ENCODE measurements at regions of chr3 and their contacts with region 1.

Region 1: DNA sequence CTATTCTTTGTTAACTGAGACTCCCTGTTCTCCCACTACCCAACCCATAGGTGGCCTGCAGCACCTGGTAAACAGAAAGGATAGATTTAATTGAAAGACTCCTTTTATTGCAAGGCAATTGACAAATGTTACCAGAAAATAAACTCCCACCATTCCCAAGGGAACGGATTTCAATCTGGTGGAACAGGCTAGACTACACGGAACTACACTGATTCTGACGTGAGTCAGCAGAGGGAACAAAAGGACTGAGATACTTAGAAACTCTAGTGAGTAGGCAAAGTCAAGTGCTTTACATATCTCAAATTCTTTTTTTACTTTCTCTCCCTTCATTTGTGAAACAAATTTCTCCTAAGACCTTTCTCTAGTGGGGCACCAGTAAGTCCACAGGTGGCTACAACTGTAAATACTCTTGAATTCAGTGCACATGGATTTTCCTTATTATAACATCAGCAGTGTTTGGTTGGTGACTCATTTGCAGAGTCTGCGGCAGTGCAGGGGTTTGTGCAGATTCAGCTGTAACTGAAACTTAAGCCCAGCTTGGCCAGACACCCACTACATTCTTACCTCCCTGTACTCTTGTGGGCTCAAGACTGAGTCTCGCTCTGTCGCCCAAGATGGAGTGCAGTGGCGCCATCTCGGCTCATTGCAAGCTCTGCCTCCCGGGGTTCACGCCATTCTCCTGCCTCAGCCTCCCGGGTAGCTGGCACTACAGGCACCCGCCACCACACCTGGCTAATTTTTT is 34.3 kb upstream of the PLSCR2 start:
- DNase-seq: peak; percentile 70 to 93
- H3K4me3 ChIP-seq: peak overlapping the region; percentile 53
- H3K27ac ChIP-seq: peak overlapping the region; percentile 100
- H3K4me1 ChIP-seq: peaks cover 54% of the 10 kb centered on the region
- H3K27me3 ChIP-seq: no peaks in the 10 kb centered on the region
- CTCF ChIP-seq: peak; percentile 43; the same call in 1 of the 2 replicates

Region 2: DNA sequence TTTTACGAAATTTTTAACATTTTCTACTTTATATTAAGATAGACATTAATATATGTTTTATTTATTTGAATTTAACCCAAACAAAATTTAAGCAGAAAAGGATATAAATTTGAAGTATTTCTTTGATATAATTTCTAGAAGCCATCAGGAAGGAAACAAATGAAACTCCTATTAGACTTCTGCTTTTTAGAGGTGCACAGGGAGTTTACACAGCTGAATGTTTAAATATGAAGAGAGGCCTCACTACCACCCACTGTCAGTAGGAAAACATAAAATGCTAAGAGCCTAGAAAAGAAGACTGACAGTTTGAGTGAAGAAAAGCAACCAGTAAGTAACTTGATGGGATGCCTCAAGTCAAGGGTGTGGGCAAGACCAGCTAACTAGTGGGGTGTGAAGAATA is 54.0 kb before region 1 on chr3:
- CTCF ChIA-PET with region 1: no interaction called
- POLR2A ChIA-PET with region 1: no interaction called
- intact Hi-C with region 1: no loop called
- DNase-seq: no peak
- H3K4me3 ChIP-seq: no peak overlapping the region
- H3K27ac ChIP-seq: no peak overlapping the region
- H3K4me1 ChIP-seq: no peaks in the 10 kb centered on the region
- H3K27me3 ChIP-seq: no peaks in the 10 kb centered on the region
- CTCF ChIP-seq: no peak

Region 3: GRCh38 chr3:146552916-146553315 is 49.3 kb after region 1 on chr3:
- CTCF ChIA-PET with region 1: interaction called, 6 read pairs
- POLR2A ChIA-PET with region 1: interaction called, 15 read pairs
- intact Hi-C with region 1: no loop called
- DNase-seq: no peak
- H3K4me3 ChIP-seq: no peak overlapping the region
- H3K27ac ChIP-seq: no peak overlapping the region
- H3K4me1 ChIP-seq: no peaks in the 10 kb centered on the region
- H3K27me3 ChIP-seq: no peaks in the 10 kb centered on the region
- CTCF ChIP-seq: no peak

Region 4: GRCh38 chr3:146655333-146655996 is 151.8 kb after region 1 on chr3:
- CTCF ChIA-PET with region 1: no interaction called
- POLR2A ChIA-PET with region 1: no interaction called
- intact Hi-C with region 1: no loop called
- DNase-seq: no peak
- H3K4me3 ChIP-seq: no peak overlapping the region
- H3K27ac ChIP-seq: no peak overlapping the region
- H3K4me1 ChIP-seq: no peaks in the 10 kb centered on the region
- H3K27me3 ChIP-seq: no peaks in the 10 kb centered on the region
- CTCF ChIP-seq: no peak

Region 5: DNA sequence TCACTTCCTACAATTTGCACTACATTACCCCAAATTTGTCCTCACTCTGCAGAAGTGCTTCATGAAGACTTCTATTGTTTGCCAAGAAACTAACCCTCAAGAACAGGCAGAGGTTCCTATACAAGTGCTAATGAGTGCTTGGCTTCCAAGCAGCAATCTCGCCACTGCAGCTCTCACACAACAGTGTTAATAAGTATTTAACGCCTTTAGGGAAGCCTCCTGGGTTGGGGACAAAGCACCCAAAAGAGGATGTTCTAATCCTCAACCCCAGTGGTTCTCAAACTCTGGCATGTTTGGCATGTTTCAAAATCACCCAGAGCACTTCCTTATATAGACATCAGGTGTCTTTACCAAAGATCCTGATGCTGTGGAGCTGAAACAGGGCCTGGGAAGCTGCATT is 838.1 kb after region 1 on chr3:
- CTCF ChIA-PET with region 1: no interaction called
- POLR2A ChIA-PET with region 1: no interaction called
- intact Hi-C with region 1: no loop called
- DNase-seq: no peak
- H3K4me3 ChIP-seq: no peak overlapping the region
- H3K27ac ChIP-seq: no peak overlapping the region
- H3K4me1 ChIP-seq: no peaks in the 10 kb centered on the region
- H3K27me3 ChIP-seq: no peaks in the 10 kb centered on the region
- CTCF ChIP-seq: no peak

Measured in PC-9 (cell line).